Esophagus muscularis mucosa (tissue), 4 donors: ENCODE measurements at regions of chr12 and their contacts with region 1.

Region 1: GRCh38 chr12:88580051-88580871 is at the start of gene KITLG:
- DNase-seq: peak; percentile 95
- H3K4me3 ChIP-seq: peak within 1 kb of the TSS; percentile 68 to 91 (median 85)
- H3K27ac ChIP-seq: peak within 1 kb of the TSS; percentile 78 to 85 (median 84)
- H3K4me1 ChIP-seq: peaks cover 3 to 36% (median 26%) of the 10 kb centered on the region in 4 donors
- H3K27me3 ChIP-seq: no peaks in the 10 kb centered on the region
- CTCF ChIP-seq: peak; percentile 50 to 57 (median 53)
- EP300 ChIP-seq: no peak
- POLR2A ChIP-seq: peak; percentile 50
- total RNA-seq, gene KITLG: 71.7 to 147 (median 121) TPM

Region 2: DNA sequence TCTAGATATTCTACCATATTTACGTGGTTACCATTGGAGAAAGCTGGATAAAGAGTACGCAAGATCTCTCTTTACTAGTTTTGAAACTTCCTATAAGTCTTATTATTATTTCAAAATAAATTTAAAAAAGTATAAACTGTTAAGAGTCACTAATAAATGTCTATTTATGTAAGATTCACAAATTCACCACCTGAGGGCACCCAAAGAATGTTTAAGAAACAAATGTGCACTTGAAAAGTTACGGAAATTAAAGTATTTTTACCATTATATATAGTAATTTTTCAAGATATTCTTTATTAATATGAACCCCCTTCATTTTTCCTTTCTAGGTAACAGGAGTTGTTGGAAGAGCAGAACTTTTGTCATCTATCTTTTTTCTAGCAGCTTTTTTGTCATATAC is 426.3 kb before region 1 on chr12:
- intact Hi-C with region 1: loop called (anchors 10 kb)
- DNase-seq: no peak
- H3K4me3 ChIP-seq: no peak overlapping the region
- H3K27ac ChIP-seq: no peak overlapping the region
- H3K4me1 ChIP-seq: peaks cover 0 to 18% (median 4%) of the 10 kb centered on the region in 4 donors
- H3K27me3 ChIP-seq: no peaks in the 10 kb centered on the region
- CTCF ChIP-seq: peak; percentile 34 to 50 (median 42)
- EP300 ChIP-seq: no peak
- POLR2A ChIP-seq: no peak

Region 3: DNA sequence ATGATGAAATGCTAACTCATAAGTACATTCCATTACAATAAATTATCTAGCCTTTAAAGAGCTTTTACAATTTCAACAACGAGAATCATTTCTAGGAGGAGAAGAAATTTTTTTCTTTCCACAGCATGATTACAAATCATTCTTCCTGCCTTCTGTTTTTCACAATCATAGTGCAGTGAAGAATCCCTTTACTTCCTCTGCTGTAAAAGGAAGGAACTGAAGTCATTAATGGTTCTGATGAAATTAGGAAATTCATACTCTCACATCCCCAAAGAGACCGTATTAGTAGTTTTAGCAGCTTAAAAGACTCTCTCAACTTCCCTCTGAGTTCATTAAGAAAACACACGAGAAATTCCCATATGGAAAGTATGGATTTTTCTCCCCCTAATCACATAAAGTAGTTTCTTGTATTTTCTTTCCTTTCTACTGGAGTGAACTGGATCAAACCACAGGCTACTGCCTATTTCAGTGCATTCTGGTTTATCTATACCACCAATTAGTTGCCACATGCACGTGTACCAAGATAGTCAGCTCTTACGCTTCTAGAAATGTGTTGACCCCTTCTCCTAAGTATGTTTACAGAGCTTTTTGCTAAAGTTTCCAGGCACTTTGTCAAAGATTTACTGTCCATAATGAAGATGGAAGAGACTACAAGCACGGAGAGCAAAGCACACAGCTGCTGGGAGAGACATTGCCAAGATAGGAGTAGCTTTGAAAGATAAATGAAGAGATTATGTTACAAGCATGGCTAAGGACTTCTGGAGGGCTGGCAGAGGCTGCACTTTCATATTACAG is 58.9 kb after region 1 on chr12:
- intact Hi-C with region 1: loop called (anchors 5 kb)
- DNase-seq: no peak
- H3K4me3 ChIP-seq: peak overlapping the region; percentile 3 to 48 (median 26)
- H3K27ac ChIP-seq: peak overlapping the region; percentile 67 to 79 (median 71)
- H3K4me1 ChIP-seq: peaks cover 0 to 24% (median 23%) of the 10 kb centered on the region in 4 donors
- H3K27me3 ChIP-seq: no peaks in the 10 kb centered on the region
- CTCF ChIP-seq: peak in 1 of 3 experiments; percentile 31
- EP300 ChIP-seq: no peak
- POLR2A ChIP-seq: no peak

Region 4: GRCh38 chr12:88820012-88820411 is 239.8 kb after region 1 on chr12:
- intact Hi-C with region 1: no loop called
- DNase-seq: no peak
- H3K4me3 ChIP-seq: no peak overlapping the region
- H3K27ac ChIP-seq: no peak overlapping the region
- H3K4me1 ChIP-seq: peaks cover 0 to 21% (median 13%) of the 10 kb centered on the region in 4 donors
- H3K27me3 ChIP-seq: no peaks in the 10 kb centered on the region
- CTCF ChIP-seq: no peak
- EP300 ChIP-seq: no peak
- POLR2A ChIP-seq: no peak

Region 5: DNA sequence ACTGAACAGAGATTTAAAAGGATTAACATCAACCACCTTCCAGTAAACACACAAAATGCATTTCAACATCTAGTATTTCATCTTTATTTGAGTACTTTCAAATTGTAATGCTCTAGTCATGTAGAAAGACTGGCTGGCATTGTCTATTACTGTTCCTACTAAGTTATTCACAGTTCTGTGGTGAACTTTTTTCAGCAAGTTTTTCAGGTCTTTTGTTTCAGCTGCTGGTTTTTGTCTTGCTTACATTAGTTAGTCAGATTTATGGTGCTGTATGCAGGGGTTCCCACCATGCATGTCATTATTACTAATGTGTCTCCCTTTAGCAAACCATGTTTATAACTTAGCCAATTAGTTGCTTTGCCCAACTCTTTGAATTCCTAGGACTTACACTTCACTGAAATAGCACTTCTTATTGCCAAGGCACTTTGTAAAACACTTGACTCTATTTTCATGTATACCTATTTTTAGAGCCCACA is 253.4 kb after region 1 on chr12:
- intact Hi-C with region 1: loop called (anchors 10 kb)
- DNase-seq: no peak
- H3K4me3 ChIP-seq: no peak overlapping the region
- H3K27ac ChIP-seq: peak overlapping the region; percentile 52 to 65 (median 62)
- H3K4me1 ChIP-seq: peaks cover 6 to 26% (median 11%) of the 10 kb centered on the region in 4 donors
- H3K27me3 ChIP-seq: no peaks in the 10 kb centered on the region
- CTCF ChIP-seq: no peak
- EP300 ChIP-seq: no peak
- POLR2A ChIP-seq: no peak

Region 6: GRCh38 chr12:88993651-88994050 is 413.4 kb after region 1 on chr12:
- intact Hi-C with region 1: loop called (anchors 2 kb)
- DNase-seq: no peak
- H3K4me3 ChIP-seq: no peak overlapping the region
- H3K27ac ChIP-seq: no peak overlapping the region
- H3K4me1 ChIP-seq: peaks cover 0 to 16% (median 5%) of the 10 kb centered on the region in 4 donors
- H3K27me3 ChIP-seq: no peaks in the 10 kb centered on the region
- CTCF ChIP-seq: peak; percentile 62 to 70 (median 66)
- EP300 ChIP-seq: no peak
- POLR2A ChIP-seq: no peak